ENCODE measurements at regions of chr3 and their contacts with region 1.

Region 1: GRCh38 chr3:160343132-160343531 is 55.9 kb downstream of the IFT80 start:
- DNase-seq: peak in 2 of 9 donors; percentile 1 to 12
- ATAC-seq: no peak
- H3K4me3 ChIP-seq: no peak overlapping the region
- H3K4me3 Mint-ChIP-seq: no peak overlapping the region
- H3K27ac ChIP-seq: no peak overlapping the region
- H3K27ac Mint-ChIP-seq: no peak overlapping the region
- H3K4me1 ChIP-seq: no peaks in the 10 kb centered on the region
- H3K4me1 Mint-ChIP-seq: no peaks in the 10 kb centered on the region
- H3K27me3 ChIP-seq: no peaks in the 10 kb centered on the region
- H3K27me3 Mint-ChIP-seq: no peaks in the 10 kb centered on the region

Region 2: GRCh38 chr3:159884661-159885402 is 458.3 kb before region 1 on chr3:
- CTCF ChIA-PET with region 1: no interaction called
- POLR2A ChIA-PET with region 1: no interaction called
- intact Hi-C with region 1: loop called in 1 of 2 experiments (anchors 2 kb)
- DNase-seq: peak in 3 of 9 donors; percentile 3 to 16 (median 9)
- ATAC-seq: peak; percentile 57
- H3K4me3 ChIP-seq: no peak overlapping the region
- H3K4me3 Mint-ChIP-seq: no peak overlapping the region
- H3K27ac ChIP-seq: no peak overlapping the region
- H3K27ac Mint-ChIP-seq: no peak overlapping the region
- H3K4me1 ChIP-seq: no peaks in the 10 kb centered on the region
- H3K4me1 Mint-ChIP-seq: no peaks in the 10 kb centered on the region
- H3K27me3 ChIP-seq: no peaks in the 10 kb centered on the region
- H3K27me3 Mint-ChIP-seq: peaks cover 0 to 24% (median 15%) of the 10 kb centered on the region in 5 donors

Region 3: GRCh38 chr3:159988617-159989271 is 354.4 kb before region 1 on chr3 and contains the start of gene IL12A:
- CTCF ChIA-PET with region 1: no interaction called
- POLR2A ChIA-PET with region 1: no interaction called
- intact Hi-C with region 1: loop called (anchors 1 kb)
- DNase-seq: peak; percentile 59 to 85 (median 75)
- ATAC-seq: peak; percentile 98
- H3K4me3 ChIP-seq: peak within 1 kb of the TSS; percentile 56
- H3K4me3 Mint-ChIP-seq: peak within 1 kb of the TSS; percentile 82 to 89 (median 84)
- H3K27ac ChIP-seq: peak within 1 kb of the TSS; percentile 32
- H3K27ac Mint-ChIP-seq: peak within 1 kb of the TSS in 5 of 9 donors; percentile 58 to 65 (median 62)
- H3K4me1 ChIP-seq: peaks cover 6 to 9% of the 10 kb centered on the region in 2 donors
- H3K4me1 Mint-ChIP-seq: peaks cover 6 to 33% (median 15%) of the 10 kb centered on the region in 7 donors
- H3K27me3 ChIP-seq: no peaks in the 10 kb centered on the region
- H3K27me3 Mint-ChIP-seq: peaks cover 0 to 24% (median 10%) of the 10 kb centered on the region in 5 donors
- total RNA-seq, gene IL12A: 0.40 to 1.8 (median 1.3) TPM

Region 4: GRCh38 chr3:160027541-160028195 is 315.5 kb before region 1 on chr3:
- CTCF ChIA-PET with region 1: no interaction called
- POLR2A ChIA-PET with region 1: no interaction called
- intact Hi-C with region 1: loop called in 1 of 2 experiments (anchors 2 kb)
- DNase-seq: peak in 1 of 9 donors; percentile 36
- ATAC-seq: peak; percentile 22
- H3K4me3 ChIP-seq: no peak overlapping the region
- H3K4me3 Mint-ChIP-seq: peak overlapping the region in 1 of 10 donors; percentile 54
- H3K27ac ChIP-seq: no peak overlapping the region
- H3K27ac Mint-ChIP-seq: peak overlapping the region in 2 of 9 donors; percentile 28 to 88
- H3K4me1 ChIP-seq: no peaks in the 10 kb centered on the region
- H3K4me1 Mint-ChIP-seq: peaks cover 0 to 33% (median 0%) of the 10 kb centered on the region in 7 donors
- H3K27me3 ChIP-seq: no peaks in the 10 kb centered on the region
- H3K27me3 Mint-ChIP-seq: no peaks in the 10 kb centered on the region

Region 5: DNA sequence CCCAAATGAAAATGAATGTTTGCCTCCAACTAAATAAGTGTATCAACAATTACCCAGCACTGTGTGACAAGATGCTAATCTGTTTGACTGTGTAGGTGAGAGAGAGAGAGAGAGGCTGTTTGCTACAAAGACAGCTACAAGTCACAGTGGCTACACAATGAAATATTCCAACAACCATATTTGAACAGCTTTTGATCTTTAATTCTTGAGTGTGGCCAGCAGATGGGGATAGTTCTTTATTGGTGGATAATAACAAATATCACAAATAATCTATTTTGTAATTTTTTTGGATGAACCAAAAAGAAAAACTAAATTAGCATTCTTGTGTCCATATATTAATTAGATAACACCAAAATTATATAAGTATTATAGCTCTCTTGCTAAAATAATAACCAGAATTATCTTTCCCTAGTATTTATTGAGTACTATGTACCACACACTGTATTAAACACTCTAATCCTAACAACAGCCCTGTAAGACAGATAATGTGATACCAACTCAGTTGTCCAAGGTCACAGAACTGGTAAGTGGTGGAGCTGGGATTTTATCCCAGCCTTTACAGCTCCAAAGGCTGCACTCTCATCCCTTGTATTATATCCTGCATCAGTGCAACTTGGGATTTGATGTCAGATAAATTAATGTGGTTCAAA is 179.8 kb before region 1 on chr3:
- CTCF ChIA-PET with region 1: interaction called, 4 read pairs
- POLR2A ChIA-PET with region 1: no interaction called
- intact Hi-C with region 1: loop called in 1 of 2 experiments (anchors 1 kb)
- DNase-seq: peak in 4 of 9 donors; percentile 1 to 19 (median 7)
- ATAC-seq: no peak
- H3K4me3 ChIP-seq: no peak overlapping the region
- H3K4me3 Mint-ChIP-seq: no peak overlapping the region
- H3K27ac ChIP-seq: no peak overlapping the region
- H3K27ac Mint-ChIP-seq: no peak overlapping the region
- H3K4me1 ChIP-seq: no peaks in the 10 kb centered on the region
- H3K4me1 Mint-ChIP-seq: peaks cover 0 to 3% (median 0%) of the 10 kb centered on the region in 7 donors
- H3K27me3 ChIP-seq: no peaks in the 10 kb centered on the region
- H3K27me3 Mint-ChIP-seq: peaks cover 0 to 33% (median 17%) of the 10 kb centered on the region in 5 donors